HepG2 (cell line): ENCODE measurements at regions of chr12 and their contacts with region 1.

Region 1: DNA sequence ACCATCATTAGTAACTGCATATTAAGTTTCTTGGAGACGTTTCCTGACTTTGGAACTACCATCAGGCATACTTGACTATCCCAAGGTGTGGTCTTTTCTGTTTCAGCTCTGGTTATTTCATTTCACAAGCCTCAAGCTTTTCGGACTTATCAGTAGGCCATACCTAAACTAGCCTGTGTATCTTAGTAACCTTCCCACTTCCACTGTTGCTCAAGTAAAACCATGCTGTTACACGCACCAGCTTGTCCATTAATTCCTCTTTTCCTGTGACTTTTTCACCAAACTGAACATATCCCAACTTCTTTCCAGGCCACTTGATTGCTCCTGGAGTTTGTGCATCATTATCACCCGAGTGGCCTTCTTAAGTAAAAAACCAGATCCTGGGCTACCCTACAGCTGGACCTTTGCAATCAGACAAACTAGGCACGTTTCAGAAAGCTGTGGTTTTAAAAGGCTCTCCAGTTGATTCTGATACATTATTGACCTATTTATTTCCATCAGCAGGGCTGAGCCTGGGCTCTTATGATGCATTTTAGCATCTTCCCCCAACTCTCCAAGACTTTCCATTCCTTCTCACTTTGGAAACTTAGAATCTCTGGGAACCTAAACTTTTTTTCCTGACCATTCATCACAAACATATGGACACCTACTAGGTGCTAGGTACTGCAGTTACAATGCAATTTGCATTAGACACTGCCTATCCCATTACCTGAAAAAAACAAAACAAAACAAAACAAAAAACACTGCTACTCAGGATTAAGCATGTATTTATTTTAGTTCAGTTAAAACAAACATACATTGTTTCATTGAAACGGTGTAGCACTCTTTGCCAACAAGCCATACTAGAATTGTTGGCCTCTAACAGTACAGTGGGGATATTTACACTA is 14.9 kb downstream of the SLC38A2 start:
- DNase-seq: peak; percentile 75
- ATAC-seq: peak; percentile 59
- H3K4me3 ChIP-seq: no peak overlapping the region
- H3K27ac ChIP-seq: peak overlapping the region; percentile 10
- H3K4me1 ChIP-seq: peaks cover 16% of the 10 kb centered on the region
- H3K27me3 ChIP-seq: no peaks in the 10 kb centered on the region
- CTCF ChIP-seq: no peak
- EP300 ChIP-seq: no peak
- POLR2A ChIP-seq: peak; percentile 71 to 89
- RAD21 ChIP-seq: peak; percentile 60

Region 2: DNA sequence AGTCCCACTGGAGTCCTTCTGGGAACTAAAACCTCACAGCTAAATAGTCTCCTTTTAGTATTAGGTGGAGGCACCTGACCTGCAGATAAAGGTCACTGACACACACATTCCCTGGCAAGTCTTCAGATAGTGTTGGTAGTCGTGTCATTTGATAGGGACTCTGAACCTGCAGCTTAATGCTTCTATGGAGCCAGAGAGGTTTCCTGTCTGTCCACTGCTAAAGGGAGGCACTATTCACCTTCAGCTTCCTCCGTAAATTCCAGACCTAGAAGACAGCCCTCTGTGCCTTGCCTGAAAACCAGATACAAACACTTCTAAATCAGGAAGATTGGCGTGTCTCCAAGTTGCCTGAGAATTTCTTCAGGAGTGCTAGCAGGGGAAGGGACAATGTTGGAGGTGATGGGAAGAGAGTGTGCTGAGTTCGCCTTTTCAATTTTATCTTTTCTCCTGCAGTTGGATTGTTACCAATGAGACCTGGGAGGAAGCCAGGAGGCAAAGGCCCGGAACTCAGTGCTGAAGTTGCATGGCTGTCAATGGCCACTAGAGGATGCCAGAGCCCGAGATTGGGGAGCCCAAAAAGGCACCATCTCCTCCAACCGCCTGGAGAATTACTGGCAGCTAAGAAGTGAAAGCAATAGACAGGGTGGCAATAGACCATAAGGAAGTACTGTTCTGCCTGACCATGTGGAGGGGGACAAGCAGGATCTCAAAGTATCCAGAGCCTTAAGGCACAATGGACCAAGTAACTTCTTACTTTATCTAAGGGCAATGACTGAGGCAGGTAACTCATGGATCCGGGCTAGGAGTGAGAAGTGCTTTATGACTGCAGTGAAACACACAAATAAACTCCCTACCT is 285.7 kb before region 1 on chr12:
- CTCF ChIA-PET with region 1: no interaction called
- POLR2A ChIA-PET with region 1: no interaction called
- in situ Hi-C with region 1: no loop called
- intact Hi-C with region 1: loop called (anchors 2 kb)
- DNase-seq: peak; percentile 46
- ATAC-seq: peak; percentile 99
- H3K4me3 ChIP-seq: peak overlapping the region; percentile 34 to 45 (median 41); a peak in 5 of 6 replicates
- H3K27ac ChIP-seq: no peak overlapping the region
- H3K4me1 ChIP-seq: peaks cover 8% of the 10 kb centered on the region
- H3K27me3 ChIP-seq: no peaks in the 10 kb centered on the region; a peak in 1 of 5 replicates
- CTCF ChIP-seq: peak; percentile 94
- EP300 ChIP-seq: no peak
- POLR2A ChIP-seq: no peak
- RAD21 ChIP-seq: peak; percentile 73